ENCODE measurements at regions of chr6 and their contacts with region 1.

Region 1: GRCh38 chr6:71349395-71349794 is 60.8 kb downstream of the OGFRL1 start:
- DNase-seq: no peak
- H3K4me3 ChIP-seq: no peak overlapping the region
- H3K27ac ChIP-seq: peak overlapping the region; percentile 3 to 79 (median 67)
- H3K4me1 ChIP-seq: peaks cover 20 to 26% (median 22%) of the 10 kb centered on the region in 4 donors
- H3K27me3 ChIP-seq: no peaks in the 10 kb centered on the region
- CTCF ChIP-seq: peak; percentile 64 to 78 (median 69)
- EP300 ChIP-seq: no peak
- POLR2A ChIP-seq: no peak

Region 2: GRCh38 chr6:70507161-70507560 is 842.2 kb before region 1 on chr6:
- intact Hi-C with region 1: no loop called
- DNase-seq: no peak
- H3K4me3 ChIP-seq: no peak overlapping the region
- H3K27ac ChIP-seq: no peak overlapping the region
- H3K4me1 ChIP-seq: no peaks in the 10 kb centered on the region
- H3K27me3 ChIP-seq: no peaks in the 10 kb centered on the region
- CTCF ChIP-seq: no peak
- EP300 ChIP-seq: no peak
- POLR2A ChIP-seq: no peak

Region 3: GRCh38 chr6:71190809-71191208 is 158.6 kb before region 1 on chr6:
- intact Hi-C with region 1: loop called (anchors 2 kb)
- DNase-seq: no peak
- H3K4me3 ChIP-seq: no peak overlapping the region
- H3K27ac ChIP-seq: no peak overlapping the region
- H3K4me1 ChIP-seq: no peaks in the 10 kb centered on the region
- H3K27me3 ChIP-seq: no peaks in the 10 kb centered on the region
- CTCF ChIP-seq: peak; percentile 18 to 28 (median 23)
- EP300 ChIP-seq: no peak
- POLR2A ChIP-seq: no peak

Measured in esophagus muscularis mucosa (tissue), 4 donors.